MCF 10A (cell line): ENCODE measurements at regions of chr5 and their contacts with region 1.

Region 1: DNA sequence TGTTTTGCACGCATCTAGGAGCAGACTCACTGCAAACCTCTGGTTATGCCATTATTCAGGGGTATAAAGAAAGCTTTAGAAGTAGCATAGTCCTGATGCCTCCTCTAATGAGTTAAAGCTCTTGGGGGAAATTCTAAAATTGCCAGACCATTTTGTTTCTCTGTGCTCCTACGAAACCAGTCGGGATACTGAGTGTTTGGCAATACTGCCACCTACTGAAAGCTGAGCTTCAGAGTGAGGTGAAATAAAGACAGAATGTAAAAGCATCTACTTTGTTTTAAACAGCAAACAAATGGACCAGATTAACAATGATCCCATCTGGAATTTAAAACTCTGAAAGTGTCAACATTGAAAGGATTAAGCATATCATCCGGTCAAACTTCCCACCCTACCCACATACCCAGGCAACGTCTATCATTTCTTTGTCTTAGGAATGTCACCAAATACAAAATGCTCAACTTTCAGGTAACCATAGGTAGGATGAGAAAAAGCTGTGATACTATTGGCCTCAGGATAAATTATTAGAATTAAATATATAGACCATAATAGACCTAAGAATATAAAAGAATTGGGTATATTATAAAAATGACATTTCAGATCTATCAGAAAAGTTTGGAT is 77.8 kb upstream of the SHISAL2B start:
- DNase-seq: peak; percentile 71
- H3K4me3 Mint-ChIP-seq: no peak overlapping the region
- H3K27ac Mint-ChIP-seq: no peak overlapping the region
- H3K4me1 Mint-ChIP-seq: no peaks in the 10 kb centered on the region
- H3K27me3 Mint-ChIP-seq: peaks cover 33% of the 10 kb centered on the region
- CTCF ChIP-seq: peak; percentile 75

Region 2: GRCh38 chr5:64147849-64148441 is 464.5 kb before region 1 on chr5:
- CTCF ChIA-PET with region 1: interaction called, 61 read pairs
- POLR2A ChIA-PET with region 1: no interaction called
- intact Hi-C with region 1: loop called (anchors 1 kb)
- DNase-seq: peak; percentile 60
- H3K4me3 Mint-ChIP-seq: no peak overlapping the region
- H3K27ac Mint-ChIP-seq: no peak overlapping the region
- H3K4me1 Mint-ChIP-seq: peaks cover 8% of the 10 kb centered on the region
- H3K27me3 Mint-ChIP-seq: no peaks in the 10 kb centered on the region
- CTCF ChIP-seq: peak; percentile 88

Region 3: GRCh38 chr5:64229163-64229774 is 383.2 kb before region 1 on chr5:
- CTCF ChIA-PET with region 1: interaction called, 332 read pairs
- POLR2A ChIA-PET with region 1: interaction called, 4 read pairs
- intact Hi-C with region 1: loop called (anchors 1 kb)
- DNase-seq: peak; percentile 49
- H3K4me3 Mint-ChIP-seq: no peak overlapping the region
- H3K27ac Mint-ChIP-seq: no peak overlapping the region
- H3K4me1 Mint-ChIP-seq: no peaks in the 10 kb centered on the region
- H3K27me3 Mint-ChIP-seq: no peaks in the 10 kb centered on the region
- CTCF ChIP-seq: peak; percentile 53

Region 4: DNA sequence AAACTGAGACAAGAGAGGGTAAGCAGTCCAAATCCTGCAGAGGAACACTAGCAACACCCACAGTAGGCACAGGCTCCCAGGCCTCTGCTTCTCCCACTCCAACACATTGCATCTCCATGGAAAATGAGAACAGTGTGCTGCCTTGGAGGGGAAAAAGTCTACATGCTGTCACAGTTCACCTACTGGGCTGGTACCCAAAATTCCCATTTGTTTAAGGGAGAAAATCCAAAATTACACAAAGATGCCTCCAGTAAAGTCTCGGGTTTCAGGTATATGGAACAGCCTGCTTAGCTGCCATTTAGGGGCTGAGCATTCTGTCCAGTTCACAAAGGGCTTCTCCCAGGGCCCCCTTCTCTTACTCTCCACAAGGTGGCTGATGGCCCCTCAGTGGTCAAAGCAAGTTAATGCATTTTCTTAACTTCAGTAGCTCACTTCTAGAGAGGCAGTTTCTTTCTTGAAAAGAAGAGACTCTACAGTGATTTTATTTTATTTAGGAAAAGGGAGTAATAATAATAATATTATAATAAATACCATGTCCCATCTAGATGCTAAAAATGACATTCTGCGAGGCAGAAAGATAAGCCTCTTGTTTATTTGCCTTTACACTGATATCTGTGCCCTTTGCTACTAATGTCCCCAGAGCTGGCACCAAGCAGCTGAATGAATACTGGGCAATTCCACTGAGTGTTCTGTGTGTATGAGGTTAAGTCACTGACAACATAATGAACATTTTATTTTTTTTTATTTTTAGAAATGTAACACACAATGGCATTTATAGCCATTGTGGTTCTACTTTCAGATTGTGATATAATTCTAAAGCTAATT is 17.2 kb before region 1 on chr5:
- CTCF ChIA-PET with region 1: interaction called, 12 read pairs
- POLR2A ChIA-PET with region 1: no interaction called
- intact Hi-C with region 1: no loop called
- DNase-seq: peak; percentile 18
- H3K4me3 Mint-ChIP-seq: no peak overlapping the region
- H3K27ac Mint-ChIP-seq: no peak overlapping the region
- H3K4me1 Mint-ChIP-seq: no peaks in the 10 kb centered on the region
- H3K27me3 Mint-ChIP-seq: no peaks in the 10 kb centered on the region
- CTCF ChIP-seq: no peak

Region 5: DNA sequence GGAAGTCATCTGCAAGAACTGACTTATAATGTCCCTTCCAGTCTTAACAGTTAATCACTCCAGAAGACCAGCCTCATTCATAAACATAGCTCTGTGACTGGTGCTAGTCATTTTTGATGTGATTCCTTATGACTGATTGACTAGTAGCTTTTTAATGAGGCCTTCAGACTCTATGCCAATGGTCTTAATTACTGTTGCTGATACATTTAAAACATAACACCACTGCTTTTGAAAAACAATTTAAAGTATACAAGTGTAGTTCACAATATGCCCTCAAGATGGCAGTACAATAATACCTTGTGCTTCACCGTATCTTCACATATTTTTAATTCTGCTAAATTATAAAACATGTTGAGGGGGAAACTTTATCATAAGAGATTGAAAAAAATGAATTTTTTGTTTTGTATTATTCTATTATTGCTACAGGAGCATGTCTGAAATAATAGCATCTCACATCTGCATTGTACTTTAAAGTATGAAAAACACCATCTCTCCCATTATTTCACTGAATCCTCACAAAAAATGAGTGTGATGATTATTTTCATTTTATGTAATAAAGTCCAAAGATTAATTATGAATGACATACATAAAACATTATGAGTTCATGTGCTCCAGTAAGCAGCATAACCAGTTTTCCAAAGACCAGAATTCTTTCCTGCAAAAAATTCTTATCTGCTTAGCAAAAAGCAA is 22.7 kb after region 1 on chr5:
- CTCF ChIA-PET with region 1: interaction called, 16 read pairs
- POLR2A ChIA-PET with region 1: no interaction called
- intact Hi-C with region 1: no loop called
- DNase-seq: peak; percentile 50
- H3K4me3 Mint-ChIP-seq: no peak overlapping the region
- H3K27ac Mint-ChIP-seq: no peak overlapping the region
- H3K4me1 Mint-ChIP-seq: no peaks in the 10 kb centered on the region
- H3K27me3 Mint-ChIP-seq: no peaks in the 10 kb centered on the region
- CTCF ChIP-seq: peak; percentile 71